ENCODE measurements at regions of chr1 and their contacts with region 1.

Region 1: DNA sequence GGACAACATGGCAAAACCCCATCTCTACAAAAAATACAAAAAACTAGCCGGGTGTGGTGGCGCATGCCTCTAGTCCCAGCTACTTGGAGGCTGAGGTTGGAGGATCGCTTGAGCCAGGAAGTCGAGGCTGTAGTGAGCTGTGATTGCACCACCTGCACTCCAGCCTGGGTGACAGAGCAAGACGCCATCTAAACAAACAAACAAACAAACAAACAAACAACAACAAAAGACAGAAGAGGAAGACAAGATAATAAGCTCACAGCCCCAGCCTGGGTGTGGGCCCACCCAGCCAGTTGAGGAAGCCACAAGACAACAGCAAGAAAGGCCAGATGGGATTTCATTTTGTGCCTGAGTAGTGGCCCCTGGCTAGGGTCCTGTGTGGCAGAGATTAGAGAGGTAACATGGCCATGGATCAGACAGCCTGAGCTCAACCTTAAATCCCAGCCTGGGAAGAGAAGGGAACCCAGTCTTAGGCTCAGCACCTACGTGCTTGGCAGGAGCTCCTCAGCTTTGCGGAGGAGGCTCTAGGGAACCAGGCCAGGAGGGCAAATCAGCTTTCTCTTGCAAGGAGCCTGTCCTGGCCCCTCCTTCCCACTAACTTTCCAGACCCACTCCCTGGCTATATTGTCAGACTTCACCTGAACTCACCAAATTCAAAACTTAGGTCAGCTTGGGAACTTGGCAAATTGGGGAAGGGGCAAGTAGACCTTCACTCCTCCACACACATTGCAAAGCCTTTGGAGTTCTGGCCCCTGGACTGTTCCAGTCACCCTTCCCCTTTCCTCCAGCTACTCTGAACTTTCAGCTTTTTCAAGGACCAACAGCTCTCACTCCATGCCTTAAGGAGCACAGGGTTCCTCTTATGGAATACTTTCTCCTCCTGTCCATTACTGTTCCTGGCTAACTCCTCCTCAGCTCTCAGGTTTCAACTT is 5.1 kb upstream of the BEST4 start:
- DNase-seq: no peak
- ATAC-seq: peak; percentile 2; the same call in 1 of the 2 replicates
- H3K4me3 Mint-ChIP-seq: peak overlapping the region; percentile 20
- H3K27ac Mint-ChIP-seq: peak overlapping the region; percentile 79
- H3K4me1 Mint-ChIP-seq: peaks cover 15% of the 10 kb centered on the region
- H3K27me3 Mint-ChIP-seq: no peaks in the 10 kb centered on the region
- CTCF ChIP-seq: no peak

Region 2: DNA sequence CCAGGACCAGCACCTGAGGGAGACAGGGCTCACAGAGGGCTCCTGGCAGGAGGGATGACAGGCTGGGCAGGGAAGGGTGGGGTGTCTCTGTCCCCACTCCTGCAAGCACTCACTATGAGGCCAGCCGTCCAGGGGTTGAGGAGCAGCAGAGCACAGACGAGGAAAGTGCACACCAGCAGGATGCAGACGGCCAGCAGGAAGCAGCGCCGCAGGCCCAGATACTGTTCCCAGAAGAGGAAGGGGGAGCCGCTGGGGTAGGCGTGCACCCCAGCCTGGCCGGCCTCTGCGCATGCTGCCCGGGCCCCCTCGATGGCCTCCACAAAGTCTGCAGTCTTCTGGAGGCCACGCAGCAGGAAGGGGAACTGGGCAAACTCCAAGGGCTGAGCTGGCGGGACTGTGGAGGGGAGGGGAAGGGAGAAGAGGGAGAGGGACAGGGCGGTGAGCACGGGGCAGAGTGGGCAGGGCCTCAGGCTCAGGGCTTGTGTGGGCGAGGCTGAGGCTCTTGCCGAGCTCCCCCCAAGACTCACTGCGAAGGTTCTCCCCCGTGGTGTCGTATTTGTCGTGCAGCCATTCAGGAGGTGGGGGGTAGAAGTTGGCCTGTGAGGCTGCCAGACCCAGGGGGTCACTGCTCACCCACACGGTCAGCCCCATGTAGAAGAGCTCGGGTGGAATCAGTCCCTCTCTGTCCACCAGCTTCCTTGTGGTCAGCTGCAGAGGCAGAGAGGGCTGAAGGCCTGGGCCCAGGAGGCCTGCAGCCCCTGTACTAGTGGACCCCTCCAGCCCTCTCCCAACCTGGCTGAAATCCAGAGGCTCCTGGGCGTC is 33.5 kb after region 1 on chr1:
- CTCF ChIA-PET with region 1: interaction called, 17 read pairs
- POLR2A ChIA-PET with region 1: no interaction called
- DNase-seq: no peak
- ATAC-seq: peak; percentile 20
- H3K4me3 Mint-ChIP-seq: no peak overlapping the region
- H3K27ac Mint-ChIP-seq: no peak overlapping the region
- H3K4me1 Mint-ChIP-seq: peaks cover 8% of the 10 kb centered on the region
- H3K27me3 Mint-ChIP-seq: no peaks in the 10 kb centered on the region
- CTCF ChIP-seq: no peak

Region 3: DNA sequence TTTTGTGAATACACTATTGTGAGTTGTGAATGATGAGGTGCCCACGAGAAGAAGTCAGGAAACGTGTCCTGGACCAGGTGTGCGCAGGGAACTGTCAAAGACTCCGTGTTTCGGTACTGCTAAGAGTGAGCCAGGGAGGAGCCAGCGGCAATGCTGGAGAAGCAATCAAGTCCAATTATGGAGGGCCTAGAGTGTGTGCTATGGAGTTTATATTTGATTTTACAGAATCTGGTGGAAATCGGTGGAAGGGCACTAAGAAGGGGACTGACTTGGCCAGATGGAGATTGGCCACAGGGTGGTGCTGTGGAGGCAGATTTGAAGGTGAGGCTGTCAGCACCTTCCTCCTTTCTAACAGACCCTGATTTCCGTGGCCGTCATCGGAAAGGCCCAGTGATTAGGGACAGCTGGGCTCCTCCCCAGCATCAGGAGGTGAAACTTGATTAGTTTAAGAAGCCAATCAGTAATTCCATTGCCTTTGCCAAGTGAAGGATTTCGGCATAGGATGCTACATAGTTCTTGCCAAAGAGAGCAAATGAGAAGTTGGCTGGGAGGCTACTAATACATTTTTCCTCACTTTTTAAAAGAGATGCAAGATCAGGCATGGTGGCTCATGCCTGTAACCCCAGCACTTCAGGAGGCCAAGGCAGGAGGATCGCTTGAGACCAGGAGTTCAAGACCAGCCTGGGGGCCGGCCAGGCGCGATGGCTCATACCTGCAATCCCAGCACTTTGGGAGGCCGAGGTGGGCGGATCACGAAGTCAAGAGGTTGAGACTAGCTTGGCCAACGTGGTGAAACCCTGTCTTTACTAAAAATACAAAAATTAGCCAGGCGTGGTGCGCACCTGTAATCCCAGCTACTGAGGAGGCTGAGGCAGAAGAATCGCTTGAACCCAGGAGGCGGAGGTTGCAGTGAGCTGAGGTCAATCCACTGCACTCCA is 43.0 kb after region 1 on chr1:
- CTCF ChIA-PET with region 1: interaction called, 17 read pairs
- POLR2A ChIA-PET with region 1: no interaction called
- DNase-seq: peak; percentile 95
- ATAC-seq: peak; percentile 90
- H3K4me3 Mint-ChIP-seq: no peak overlapping the region
- H3K27ac Mint-ChIP-seq: peak overlapping the region; percentile 28; the same call in 1 of the 2 replicates
- H3K4me1 Mint-ChIP-seq: peaks cover 16% of the 10 kb centered on the region
- H3K27me3 Mint-ChIP-seq: no peaks in the 10 kb centered on the region; the same call in 1 of the 2 replicates
- CTCF ChIP-seq: peak; percentile 80

Region 4: DNA sequence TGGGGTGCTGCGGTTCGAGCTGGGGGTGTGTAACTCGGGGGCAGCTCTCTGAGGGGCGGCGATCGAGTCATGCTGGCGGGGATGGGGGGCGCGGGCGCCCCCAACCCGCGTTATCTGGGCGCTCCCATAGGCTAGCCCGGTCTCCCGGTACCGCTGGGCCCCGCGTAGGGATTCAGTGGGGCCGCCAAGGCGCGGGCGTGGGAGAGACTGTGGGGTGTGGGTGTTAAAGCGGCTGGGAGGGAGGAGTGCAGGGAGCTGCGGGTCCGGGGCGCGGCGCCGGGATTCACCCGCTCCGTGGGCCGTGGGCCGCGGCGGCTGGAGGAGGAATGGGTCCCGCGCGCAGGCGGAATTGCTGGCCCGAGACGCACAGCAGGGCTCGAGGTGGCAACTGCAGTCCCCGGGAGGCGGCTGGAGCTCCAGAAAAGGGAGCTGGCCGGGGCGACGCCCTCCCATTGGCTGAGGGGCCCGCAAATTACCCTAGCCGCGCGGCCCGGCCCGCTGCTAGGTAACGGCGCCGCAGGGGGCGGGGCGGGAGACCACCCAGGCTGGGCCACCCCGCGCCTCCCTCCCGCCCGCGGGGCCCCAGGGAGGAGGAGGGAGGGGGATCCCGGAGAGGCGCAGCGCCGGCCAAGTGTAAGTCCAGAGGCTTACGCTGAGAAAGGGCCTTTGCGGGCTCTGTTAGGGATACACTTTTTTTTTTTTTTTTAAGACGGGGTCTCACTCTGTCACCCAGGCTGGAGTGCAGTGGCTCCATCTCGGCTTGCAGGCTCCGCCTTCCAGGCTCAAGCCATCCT is 50.0 kb after region 1 on chr1 and contains the start of gene PTCH2:
- CTCF ChIA-PET with region 1: interaction called, 11 read pairs
- POLR2A ChIA-PET with region 1: no interaction called
- DNase-seq: peak; percentile 91
- ATAC-seq: peak; percentile 93
- H3K4me3 Mint-ChIP-seq: peak within 1 kb of the TSS; percentile 67
- H3K27ac Mint-ChIP-seq: no peak within 1 kb of the TSS
- H3K4me1 Mint-ChIP-seq: peaks cover 4% of the 10 kb centered on the region; the same call in 1 of the 2 replicates
- H3K27me3 Mint-ChIP-seq: peaks cover 29% of the 10 kb centered on the region
- CTCF ChIP-seq: no peak
- total RNA-seq, gene PTCH2: 0.71 to 1.1 TPM (median 0.96 TPM) in 3 replicates

Region 5: DNA sequence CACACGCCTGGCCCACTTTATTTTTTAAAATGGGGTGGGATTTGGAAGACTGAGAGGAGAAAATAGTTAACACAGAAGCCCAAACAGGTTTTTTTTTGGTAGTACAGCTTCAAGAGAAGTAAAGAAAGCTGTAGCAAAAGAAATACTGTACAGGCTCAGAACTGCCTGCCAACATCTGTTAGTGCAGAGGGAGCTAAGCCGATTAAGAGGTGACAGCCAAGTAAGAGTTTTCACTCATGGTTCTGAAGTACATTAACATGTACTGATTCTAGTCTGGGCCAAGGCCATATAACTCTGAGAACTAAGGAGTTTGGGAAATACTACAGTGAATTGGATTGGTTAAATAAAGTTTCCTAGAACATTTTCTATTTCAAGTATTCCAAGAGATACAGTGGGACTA is 141.7 kb after region 1 on chr1:
- CTCF ChIA-PET with region 1: no interaction called
- POLR2A ChIA-PET with region 1: no interaction called
- DNase-seq: no peak
- ATAC-seq: no peak
- H3K4me3 Mint-ChIP-seq: no peak overlapping the region
- H3K27ac Mint-ChIP-seq: no peak overlapping the region
- H3K4me1 Mint-ChIP-seq: no peaks in the 10 kb centered on the region
- H3K27me3 Mint-ChIP-seq: no peaks in the 10 kb centered on the region
- CTCF ChIP-seq: no peak

Region 6: GRCh38 chr1:44947063-44947773 is 154.2 kb after region 1 on chr1:
- CTCF ChIA-PET with region 1: no interaction called
- POLR2A ChIA-PET with region 1: no interaction called
- DNase-seq: no peak
- ATAC-seq: no peak
- H3K4me3 Mint-ChIP-seq: no peak overlapping the region
- H3K27ac Mint-ChIP-seq: peak overlapping the region; percentile 40; the same call in 1 of the 2 replicates
- H3K4me1 Mint-ChIP-seq: no peaks in the 10 kb centered on the region
- H3K27me3 Mint-ChIP-seq: no peaks in the 10 kb centered on the region
- CTCF ChIP-seq: no peak

Measured in WTC11 (cell line).